Dendritic cell treated with granulocyte-macrophage colony-stimulating factor and Interleukin-4, amounts not matched to agents 40 ng/mL and 50 ng/mL, for 4 days (primary cell): ENCODE measurements at regions of chr17 and their contacts with region 1.

Region 1: GRCh38 chr17:15892731-15893657 is 51.9 kb upstream of the ADORA2B start:
- H3K4me3 Mint-ChIP-seq: no peak overlapping the region
- H3K27ac Mint-ChIP-seq: no peak overlapping the region
- H3K4me1 Mint-ChIP-seq: peaks cover 24% of the 10 kb centered on the region
- H3K27me3 Mint-ChIP-seq: peaks cover 10% of the 10 kb centered on the region

Region 2: DNA sequence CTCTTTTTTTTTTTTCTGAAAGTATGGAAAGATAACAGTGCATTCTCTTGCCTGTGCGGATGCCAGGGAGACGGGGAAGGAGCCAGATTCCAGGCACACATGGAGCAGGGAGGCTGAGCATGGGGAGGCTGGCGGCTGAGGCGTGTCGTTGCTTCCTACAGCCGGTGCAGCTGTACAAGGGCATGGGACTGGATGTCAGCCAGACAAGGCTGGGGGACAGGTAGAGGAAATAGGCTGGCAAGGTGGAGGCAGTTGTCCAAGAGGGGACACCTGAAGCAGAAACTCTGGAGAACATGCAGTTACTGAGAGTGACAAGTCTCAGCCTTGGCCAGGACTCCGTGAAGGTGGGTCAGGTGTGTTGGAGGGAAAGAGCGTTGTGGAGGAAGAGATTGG is 35.4 kb after region 1 on chr17:
- intact Hi-C with region 1: loop called (anchors 1 kb)
- H3K4me3 Mint-ChIP-seq: peak overlapping the region; percentile 73
- H3K27ac Mint-ChIP-seq: peak overlapping the region; percentile 78
- H3K4me1 Mint-ChIP-seq: peaks cover 45% of the 10 kb centered on the region
- H3K27me3 Mint-ChIP-seq: peaks cover 16% of the 10 kb centered on the region